Activated B cell treated with CpG ODN at 0.5 μM for 24 hours (primary cell): ENCODE measurements at regions of chr19 and their contacts with region 1.

Region 1: DNA sequence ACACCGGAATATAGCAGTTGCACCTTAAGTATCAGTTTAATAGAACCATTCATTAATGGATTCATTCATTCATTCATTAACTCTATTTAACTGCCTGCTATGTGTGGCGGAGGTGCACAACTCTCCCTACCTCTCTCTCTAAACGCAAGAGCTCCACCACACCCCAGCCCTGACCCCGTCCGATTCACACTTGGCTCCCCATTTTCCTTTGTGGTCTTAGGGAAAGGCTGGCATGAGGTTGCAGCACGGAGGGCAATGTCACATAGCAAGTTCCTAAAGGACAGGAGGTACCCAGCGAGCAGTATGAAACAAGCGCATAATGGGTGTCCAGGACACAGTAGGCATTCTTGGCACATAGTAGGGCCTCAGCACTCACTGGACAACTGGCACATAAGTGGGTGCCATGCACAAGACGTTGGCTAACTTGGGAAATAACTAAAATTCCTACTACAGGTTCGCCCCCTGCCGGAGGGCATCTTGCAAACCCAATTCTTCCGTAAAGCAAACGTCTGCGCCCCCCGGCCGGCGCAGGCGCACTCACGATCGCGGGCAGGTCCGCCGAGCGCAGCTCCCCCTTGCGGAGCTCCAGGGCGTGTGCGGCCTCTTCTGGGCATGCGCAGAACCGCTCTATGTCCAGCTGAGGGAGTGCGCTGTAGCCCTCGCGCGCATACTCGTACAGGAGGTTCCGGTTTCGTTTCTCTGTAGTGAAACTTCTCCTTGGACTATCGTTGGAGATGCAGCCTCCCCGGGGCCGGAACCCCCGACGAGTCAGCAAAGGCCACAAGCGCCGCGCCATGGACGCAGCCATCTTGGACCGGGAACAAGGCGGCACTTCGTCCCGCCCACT is at the start of gene SARS2:
- DNase-seq: peak; percentile 93
- ATAC-seq: peak; percentile 71
- H3K4me3 Mint-ChIP-seq: peak within 1 kb of the TSS; percentile 97
- H3K27ac Mint-ChIP-seq: peak within 1 kb of the TSS; percentile 98
- H3K4me1 Mint-ChIP-seq: peaks cover 34% of the 10 kb centered on the region
- H3K27me3 Mint-ChIP-seq: no peaks in the 10 kb centered on the region
- CTCF ChIP-seq: peak; percentile 100
- total RNA-seq, gene SARS2: 46.4 and 50.9 TPM in 2 replicates

Region 2: GRCh38 chr19:37906869-37907734 is 1023.0 kb before region 1 on chr19 and contains the start of gene SIPA1L3:
- CTCF ChIA-PET with region 1: no interaction called
- POLR2A ChIA-PET with region 1: no interaction called
- intact Hi-C with region 1: loop called (anchors 10 kb)
- DNase-seq: peak; percentile 89
- ATAC-seq: peak; percentile 92
- H3K4me3 Mint-ChIP-seq: peak within 1 kb of the TSS; percentile 86
- H3K27ac Mint-ChIP-seq: peak within 1 kb of the TSS; percentile 94
- H3K4me1 Mint-ChIP-seq: peaks cover 61% of the 10 kb centered on the region
- H3K27me3 Mint-ChIP-seq: no peaks in the 10 kb centered on the region
- CTCF ChIP-seq: no peak
- total RNA-seq, gene SIPA1L3: 120 and 145 TPM in 2 replicates

Region 3: GRCh38 chr19:38402967-38403861 is 526.9 kb before region 1 on chr19 and contains the start of gene FAM98C:
- CTCF ChIA-PET with region 1: interaction called, 23 read pairs
- POLR2A ChIA-PET with region 1: interaction called, 14 read pairs
- intact Hi-C with region 1: loop called (anchors 1 kb)
- DNase-seq: peak; percentile 99
- ATAC-seq: peak; percentile 97
- H3K4me3 Mint-ChIP-seq: peak within 1 kb of the TSS; percentile 91
- H3K27ac Mint-ChIP-seq: peak within 1 kb of the TSS; percentile 90
- H3K4me1 Mint-ChIP-seq: peaks cover 22% of the 10 kb centered on the region
- H3K27me3 Mint-ChIP-seq: peaks cover 6% of the 10 kb centered on the region
- CTCF ChIP-seq: peak; percentile 98
- total RNA-seq, gene FAM98C: 38.3 and 40.0 TPM in 2 replicates

Region 4: DNA sequence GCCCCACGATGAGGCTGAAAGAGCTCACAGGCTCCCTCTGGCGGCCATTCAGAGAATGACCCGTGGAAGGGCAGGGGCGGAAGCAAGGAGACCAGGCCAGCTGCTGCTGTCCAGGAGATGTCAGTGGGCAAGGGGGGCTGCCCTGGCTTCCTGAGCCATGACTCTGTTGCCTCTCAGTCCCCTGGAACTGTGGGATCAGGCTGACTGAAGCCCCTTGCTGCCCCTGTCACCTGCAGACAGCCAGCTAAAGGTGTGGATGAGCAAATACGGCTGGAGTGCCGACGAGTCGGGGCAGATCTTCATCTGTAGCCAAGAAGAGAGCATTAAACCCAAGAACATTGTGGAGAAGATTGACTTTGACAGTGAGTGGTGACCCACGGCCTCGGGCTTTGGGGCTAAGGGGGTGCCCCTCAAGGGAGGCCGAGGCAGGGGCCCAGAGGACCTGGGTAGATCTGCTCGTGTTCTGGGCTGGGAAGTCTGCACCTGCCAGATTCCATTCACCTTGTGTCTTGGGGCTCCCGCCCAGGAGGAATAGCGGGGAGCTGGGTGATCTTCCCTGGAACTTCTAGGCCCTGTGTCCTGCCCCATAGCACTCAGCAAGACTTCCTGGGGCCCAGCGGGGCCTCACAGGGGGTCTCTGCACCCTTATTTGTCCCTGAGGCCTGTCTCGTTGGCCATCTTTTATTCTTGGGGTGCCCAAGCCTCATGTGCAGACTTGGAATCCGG is 295.2 kb before region 1 on chr19:
- CTCF ChIA-PET with region 1: interaction called, 25 read pairs
- POLR2A ChIA-PET with region 1: interaction called, 5 read pairs
- intact Hi-C with region 1: loop called (anchors 1 kb)
- DNase-seq: peak; percentile 73
- ATAC-seq: peak; percentile 51
- H3K4me3 Mint-ChIP-seq: no peak overlapping the region
- H3K27ac Mint-ChIP-seq: peak overlapping the region; percentile 79
- H3K4me1 Mint-ChIP-seq: peaks cover 29% of the 10 kb centered on the region
- H3K27me3 Mint-ChIP-seq: no peaks in the 10 kb centered on the region
- CTCF ChIP-seq: peak; percentile 76

Region 5: GRCh38 chr19:38769635-38770211 is 160.4 kb before region 1 on chr19:
- CTCF ChIA-PET with region 1: interaction called, 11 read pairs
- POLR2A ChIA-PET with region 1: interaction called, 24 read pairs
- intact Hi-C with region 1: loop called (anchors 2 kb)
- DNase-seq: peak; percentile 94
- ATAC-seq: peak; percentile 89
- H3K4me3 Mint-ChIP-seq: peak overlapping the region; percentile 68
- H3K27ac Mint-ChIP-seq: peak overlapping the region; percentile 78
- H3K4me1 Mint-ChIP-seq: peaks cover 11% of the 10 kb centered on the region
- H3K27me3 Mint-ChIP-seq: no peaks in the 10 kb centered on the region
- CTCF ChIP-seq: peak; percentile 59

Region 6: DNA sequence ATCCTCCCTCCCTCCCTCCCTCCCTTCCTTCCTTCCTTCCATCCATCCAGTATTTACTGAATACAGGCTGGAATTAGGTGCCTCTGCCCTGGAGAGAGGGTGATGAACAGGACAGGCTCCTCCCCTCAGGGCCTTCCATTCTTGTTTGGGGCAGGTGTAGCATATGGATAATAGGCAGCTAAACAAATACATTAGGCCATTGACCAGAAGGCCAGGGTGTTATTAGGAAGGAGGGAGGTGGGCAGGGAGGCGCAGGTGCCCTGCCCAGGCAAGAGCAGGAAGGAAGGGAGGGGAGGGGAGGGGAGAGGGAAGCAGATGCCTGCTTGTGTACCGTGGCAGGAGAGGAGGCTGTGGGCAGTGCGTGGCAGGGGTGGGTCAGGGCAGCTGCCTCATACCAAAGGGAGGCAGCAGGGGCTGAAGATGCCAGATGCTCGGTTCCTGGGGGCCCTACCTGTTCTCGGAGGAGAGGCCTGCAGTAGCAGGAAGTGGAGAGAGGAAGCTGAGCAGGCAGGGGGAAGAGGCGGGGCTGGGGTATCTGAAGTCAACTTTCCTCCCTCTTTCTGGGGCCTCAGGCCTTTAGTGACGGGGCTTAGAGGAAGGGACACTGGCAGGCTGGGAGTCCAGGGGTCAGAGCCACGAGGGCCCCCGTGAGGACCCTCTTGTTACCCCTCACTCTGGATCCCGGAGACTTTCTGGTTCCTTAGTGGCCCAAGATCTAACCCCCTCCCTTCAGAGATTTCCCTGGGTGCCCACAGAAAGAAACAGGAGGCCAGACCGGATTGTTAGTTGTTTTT is 52.2 kb before region 1 on chr19 and contains the start of gene RINL:
- CTCF ChIA-PET with region 1: interaction called, 3 read pairs
- POLR2A ChIA-PET with region 1: interaction called, 4 read pairs
- intact Hi-C with region 1: loop called (anchors 1 kb)
- DNase-seq: peak; percentile 57
- ATAC-seq: peak; percentile 94
- H3K4me3 Mint-ChIP-seq: peak within 1 kb of the TSS; percentile 92
- H3K27ac Mint-ChIP-seq: peak within 1 kb of the TSS; percentile 98
- H3K4me1 Mint-ChIP-seq: peaks cover 48% of the 10 kb centered on the region
- H3K27me3 Mint-ChIP-seq: no peaks in the 10 kb centered on the region
- CTCF ChIP-seq: no peak
- total RNA-seq, gene RINL: 53.5 and 65.0 TPM in 2 replicates